HCT116 (cell line): ENCODE measurements at regions of chr17 and their contacts with region 1.

Region 1: DNA sequence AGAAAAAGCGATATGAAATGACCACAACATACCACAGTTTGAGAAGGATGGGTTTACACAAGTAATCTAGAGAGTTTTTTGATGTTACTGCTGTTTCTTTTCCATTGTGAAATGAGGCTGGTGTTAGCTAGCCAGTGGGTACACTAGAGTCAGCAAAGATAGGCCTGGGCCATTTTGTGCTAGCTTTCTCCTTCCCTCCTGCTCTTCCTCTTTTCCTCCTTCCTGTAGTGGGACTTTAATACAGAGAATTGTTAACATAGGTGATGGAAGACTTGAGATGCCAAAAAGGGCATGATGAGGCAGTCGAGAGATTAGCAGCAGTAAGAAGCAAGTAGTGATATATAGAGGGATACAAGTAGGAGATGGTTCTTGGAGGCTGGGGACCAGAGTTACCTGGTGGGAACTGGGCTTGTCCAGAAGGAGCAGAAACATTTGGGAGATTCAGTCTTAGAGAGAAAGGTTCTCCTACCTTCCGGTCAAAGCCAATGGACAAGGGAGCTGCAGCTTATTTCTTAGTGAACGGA is 7.7 kb downstream of the NSRP1 start:
- DNase-seq: no peak
- ATAC-seq: no peak
- H3K4me3 ChIP-seq: no peak overlapping the region
- H3K27ac ChIP-seq: no peak overlapping the region; the same call in 1 of the 2 replicates
- H3K4me1 ChIP-seq: no peaks in the 10 kb centered on the region
- H3K27me3 ChIP-seq: no peaks in the 10 kb centered on the region
- CTCF ChIP-seq: no peak
- POLR2A ChIP-seq: no peak
- RAD21 ChIP-seq: no peak

Region 2: GRCh38 chr17:30278032-30278431 is 153.7 kb after region 1 on chr17:
- CTCF ChIA-PET with region 1: interaction called, 17 read pairs
- POLR2A ChIA-PET with region 1: no interaction called
- RAD21 ChIA-PET with region 1: no interaction called
- intact Hi-C with region 1: loop called (anchors 1 kb)
- DNase-seq: no peak
- ATAC-seq: peak; percentile 58; the same call in 1 of the 2 replicates
- H3K4me3 ChIP-seq: no peak overlapping the region
- H3K27ac ChIP-seq: no peak overlapping the region
- H3K4me1 ChIP-seq: no peaks in the 10 kb centered on the region
- H3K27me3 ChIP-seq: no peaks in the 10 kb centered on the region
- CTCF ChIP-seq: peak; percentile 27 to 49 (median 40); a peak in 3 of 6 replicates
- POLR2A ChIP-seq: no peak
- RAD21 ChIP-seq: peak; percentile 51

Region 3: DNA sequence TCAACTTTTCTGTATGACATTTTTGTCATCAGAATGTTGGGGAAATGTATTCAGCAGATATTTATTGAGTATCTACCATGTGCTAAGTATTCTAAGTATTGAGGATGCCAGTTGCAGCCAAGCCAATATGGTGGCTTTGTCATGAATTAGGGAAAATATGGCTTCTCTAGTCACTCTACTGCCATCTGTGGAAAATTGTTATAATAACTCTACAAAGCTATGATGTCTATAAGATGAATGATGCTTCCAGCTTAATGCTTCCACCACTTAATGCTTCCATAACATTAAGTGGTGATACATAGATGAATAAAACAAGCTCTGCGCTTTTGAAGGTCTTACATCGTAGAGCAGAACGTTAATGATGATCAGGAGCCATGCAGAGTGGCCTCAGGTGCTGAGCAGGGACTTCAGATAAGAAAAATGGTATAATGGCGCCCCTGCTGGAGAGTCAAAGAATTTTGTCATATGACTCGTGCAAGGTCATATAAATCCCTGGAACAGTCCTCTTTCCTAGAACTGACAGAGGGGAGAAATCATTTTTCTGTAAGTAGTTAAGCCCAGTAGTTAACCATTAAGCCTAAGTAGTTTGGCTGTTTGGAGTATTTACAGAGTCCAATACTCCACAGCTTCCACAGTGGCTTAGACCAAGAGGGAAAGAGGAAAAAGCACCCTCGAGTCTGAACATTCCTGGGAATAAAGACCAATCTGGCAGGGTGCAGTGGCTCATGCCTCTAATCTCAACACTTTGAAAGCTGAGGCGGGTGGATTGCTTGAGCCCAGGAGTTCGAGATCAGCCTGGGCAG is 212.2 kb after region 1 on chr17:
- CTCF ChIA-PET with region 1: interaction called, 22 read pairs
- POLR2A ChIA-PET with region 1: interaction called, 3 read pairs
- RAD21 ChIA-PET with region 1: no interaction called
- intact Hi-C with region 1: loop called (anchors 1 kb)
- DNase-seq: peak; percentile 79
- ATAC-seq: peak; percentile 80
- H3K4me3 ChIP-seq: peak overlapping the region in 1 of 2 experiments; percentile 37; a peak in 1 of 4 replicates
- H3K27ac ChIP-seq: no peak overlapping the region
- H3K4me1 ChIP-seq: peaks cover 7 to 20% of the 10 kb centered on the region in 2 experiments; a peak in 3 of 4 replicates
- H3K27me3 ChIP-seq: no peaks in the 10 kb centered on the region
- CTCF ChIP-seq: peak; percentile 49 to 98 (median 89)
- POLR2A ChIP-seq: no peak
- RAD21 ChIP-seq: peak; percentile 81; the same call in 1 of the 2 replicates